Naive thymus-derived CD4-positive, alpha-beta T cell (primary cell): ENCODE measurements at regions of chr2 and their contacts with region 1.

Region 1: DNA sequence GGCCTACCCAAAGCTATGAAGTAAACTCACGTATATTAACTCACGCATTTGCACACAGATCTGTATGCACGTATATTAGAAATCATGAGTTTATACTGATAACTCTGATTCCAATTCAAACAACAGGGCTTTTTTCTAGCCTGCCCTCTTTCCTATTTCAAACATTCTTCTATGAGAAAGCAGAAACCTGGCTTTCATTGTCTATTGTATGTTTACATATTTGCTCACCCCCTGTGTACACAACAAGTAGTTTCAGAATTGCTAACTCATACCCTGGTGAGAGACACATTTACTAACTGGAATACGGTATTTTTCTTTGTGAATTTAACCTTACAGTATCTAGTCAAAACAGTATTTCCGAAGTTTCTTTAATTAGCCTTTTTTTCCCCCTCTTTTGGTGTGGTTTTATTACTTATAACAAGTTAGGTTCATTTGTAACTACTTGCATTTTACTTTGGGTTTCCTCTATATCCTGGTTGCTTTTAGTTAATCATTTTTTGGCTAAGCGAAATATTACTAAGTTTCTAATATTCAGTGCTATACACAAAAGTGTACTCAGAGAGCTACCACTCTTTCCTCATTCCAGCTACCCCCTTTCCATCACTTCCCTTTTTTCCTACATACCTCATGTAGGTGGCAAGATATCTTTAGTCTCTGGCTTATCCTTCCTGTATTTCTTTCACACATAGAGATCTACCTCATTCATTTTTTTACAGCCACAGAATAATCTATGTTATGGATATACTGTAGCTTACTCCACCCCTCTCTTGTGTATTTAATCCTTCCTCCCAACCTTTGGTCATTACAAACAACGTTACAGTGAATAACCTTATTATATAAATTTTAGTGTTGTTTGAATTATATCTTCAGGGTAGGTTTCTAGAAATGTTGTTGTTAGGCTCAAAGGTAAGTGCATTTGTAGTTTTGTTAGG is 112.7 kb upstream of the BCL2L11 start:
- DNase-seq: no peak
- ATAC-seq: no peak
- H3K4me3 ChIP-seq: no peak overlapping the region
- H3K4me3 Mint-ChIP-seq: no peak overlapping the region
- H3K27ac ChIP-seq: no peak overlapping the region
- H3K27ac Mint-ChIP-seq: no peak overlapping the region
- H3K4me1 ChIP-seq: peaks cover 0 to 12% of the 10 kb centered on the region in 2 donors
- H3K4me1 Mint-ChIP-seq: peaks cover 0 to 12% (median 7%) of the 10 kb centered on the region in 7 donors
- H3K27me3 ChIP-seq: no peaks in the 10 kb centered on the region
- H3K27me3 Mint-ChIP-seq: peaks cover 16 to 48% (median 26%) of the 10 kb centered on the region in 5 donors

Region 2: GRCh38 chr2:110818767-110819481 is 189.1 kb before region 1 on chr2:
- CTCF ChIA-PET with region 1: no interaction called
- POLR2A ChIA-PET with region 1: no interaction called
- intact Hi-C with region 1: loop called in 1 of 2 experiments (anchors 10 kb)
- DNase-seq: no peak
- ATAC-seq: no peak
- H3K4me3 ChIP-seq: no peak overlapping the region
- H3K4me3 Mint-ChIP-seq: no peak overlapping the region
- H3K27ac ChIP-seq: no peak overlapping the region
- H3K27ac Mint-ChIP-seq: no peak overlapping the region
- H3K4me1 ChIP-seq: no peaks in the 10 kb centered on the region
- H3K4me1 Mint-ChIP-seq: peaks cover 0 to 14% (median 10%) of the 10 kb centered on the region in 7 donors
- H3K27me3 ChIP-seq: no peaks in the 10 kb centered on the region
- H3K27me3 Mint-ChIP-seq: peaks cover 0 to 59% (median 7%) of the 10 kb centered on the region in 5 donors